OCI-LY7 (cell line): ENCODE measurements at regions of chr3 and their contacts with region 1.

Region 1: GRCh38 chr3:183515968-183516851 is 39.3 kb downstream of the KLHL6 start:
- DNase-seq: peak; percentile 93
- H3K4me3 ChIP-seq: peak overlapping the region; percentile 51
- H3K27ac ChIP-seq: peak overlapping the region; percentile 94
- H3K4me1 ChIP-seq: peaks cover 99% of the 10 kb centered on the region
- CTCF ChIP-seq: peak; percentile 84

Region 2: GRCh38 chr3:183339461-183340079 is 176.6 kb before region 1 on chr3:
- CTCF ChIA-PET with region 1: no interaction called
- POLR2A ChIA-PET with region 1: no interaction called
- intact Hi-C with region 1: no loop called
- DNase-seq: no peak
- H3K4me3 ChIP-seq: no peak overlapping the region
- H3K27ac ChIP-seq: no peak overlapping the region
- H3K4me1 ChIP-seq: no peaks in the 10 kb centered on the region
- CTCF ChIP-seq: no peak

Region 3: GRCh38 chr3:183527428-183528379 is 11.5 kb after region 1 on chr3:
- CTCF ChIA-PET with region 1: interaction called, 4 read pairs
- POLR2A ChIA-PET with region 1: interaction called, 32 read pairs
- intact Hi-C with region 1: no loop called
- DNase-seq: peak; percentile 60
- H3K4me3 ChIP-seq: peak overlapping the region; percentile 1
- H3K27ac ChIP-seq: peak overlapping the region; percentile 53
- H3K4me1 ChIP-seq: peaks cover 72% of the 10 kb centered on the region
- CTCF ChIP-seq: no peak

Region 4: GRCh38 chr3:183537295-183537730 is 21.1 kb after region 1 on chr3:
- CTCF ChIA-PET with region 1: interaction called, 3 read pairs
- POLR2A ChIA-PET with region 1: interaction called, 15 read pairs
- intact Hi-C with region 1: loop called (anchors 1 kb)
- DNase-seq: no peak
- H3K4me3 ChIP-seq: peak overlapping the region; percentile 57
- H3K27ac ChIP-seq: peak overlapping the region; percentile 74
- H3K4me1 ChIP-seq: peaks cover 98% of the 10 kb centered on the region
- CTCF ChIP-seq: no peak

Region 5: GRCh38 chr3:183548262-183548769 is 32.1 kb after region 1 on chr3:
- CTCF ChIA-PET with region 1: interaction called, 4 read pairs
- POLR2A ChIA-PET with region 1: interaction called, 47 read pairs
- intact Hi-C with region 1: loop called (anchors 1 kb)
- DNase-seq: no peak
- H3K4me3 ChIP-seq: peak overlapping the region; percentile 97
- H3K27ac ChIP-seq: peak overlapping the region; percentile 96
- H3K4me1 ChIP-seq: peaks cover 82% of the 10 kb centered on the region
- CTCF ChIP-seq: no peak

Region 6: GRCh38 chr3:183576487-183577107 is 60.4 kb after region 1 on chr3:
- CTCF ChIA-PET with region 1: no interaction called
- POLR2A ChIA-PET with region 1: interaction called, 12 read pairs
- intact Hi-C with region 1: no loop called
- DNase-seq: peak; percentile 97
- H3K4me3 ChIP-seq: peak overlapping the region; percentile 47
- H3K27ac ChIP-seq: peak overlapping the region; percentile 94
- H3K4me1 ChIP-seq: peaks cover 96% of the 10 kb centered on the region
- CTCF ChIP-seq: no peak